CD4-positive, alpha-beta memory T cell (primary cell): ENCODE measurements at regions of chr9 and their contacts with region 1.

Region 1: GRCh38 chr9:114007991-114008666 is 70.0 kb downstream of the AMBP start:
- DNase-seq: no peak
- H3K4me3 ChIP-seq: no peak overlapping the region
- H3K4me3 Mint-ChIP-seq: no peak overlapping the region
- H3K27ac ChIP-seq: no peak overlapping the region
- H3K27ac Mint-ChIP-seq: no peak overlapping the region
- H3K4me1 ChIP-seq: no peaks in the 10 kb centered on the region
- H3K4me1 Mint-ChIP-seq: no peaks in the 10 kb centered on the region
- H3K27me3 ChIP-seq: no peaks in the 10 kb centered on the region
- H3K27me3 Mint-ChIP-seq: no peaks in the 10 kb centered on the region

Region 2: DNA sequence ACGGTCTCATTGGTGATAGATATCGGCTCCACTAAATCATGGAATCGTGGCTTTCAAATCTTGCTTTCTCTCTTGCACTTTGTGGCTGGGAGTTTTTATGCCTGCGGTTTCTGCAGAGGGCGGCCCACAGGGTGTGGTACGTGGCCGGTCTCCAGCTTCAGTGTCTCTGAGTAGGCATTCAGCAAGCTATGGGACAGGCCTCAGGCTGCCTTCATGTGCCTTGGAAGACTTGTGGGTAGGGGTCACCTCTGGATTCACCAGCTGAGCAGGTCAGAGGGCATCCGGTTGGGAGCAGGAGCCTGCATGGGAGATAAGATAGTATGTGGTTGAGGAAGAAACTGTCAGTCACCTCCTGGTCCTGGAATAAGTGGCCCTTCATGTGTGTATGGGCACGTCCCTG is 22.2 kb after region 1 on chr9:
- CTCF ChIA-PET with region 1: no interaction called
- POLR2A ChIA-PET with region 1: no interaction called
- intact Hi-C with region 1: loop called (anchors 1 kb)
- DNase-seq: no peak
- H3K4me3 ChIP-seq: no peak overlapping the region
- H3K4me3 Mint-ChIP-seq: no peak overlapping the region
- H3K27ac ChIP-seq: no peak overlapping the region
- H3K27ac Mint-ChIP-seq: no peak overlapping the region
- H3K4me1 ChIP-seq: no peaks in the 10 kb centered on the region
- H3K4me1 Mint-ChIP-seq: no peaks in the 10 kb centered on the region
- H3K27me3 ChIP-seq: no peaks in the 10 kb centered on the region
- H3K27me3 Mint-ChIP-seq: peaks cover 0 to 2% of the 10 kb centered on the region in 2 donors

Region 3: DNA sequence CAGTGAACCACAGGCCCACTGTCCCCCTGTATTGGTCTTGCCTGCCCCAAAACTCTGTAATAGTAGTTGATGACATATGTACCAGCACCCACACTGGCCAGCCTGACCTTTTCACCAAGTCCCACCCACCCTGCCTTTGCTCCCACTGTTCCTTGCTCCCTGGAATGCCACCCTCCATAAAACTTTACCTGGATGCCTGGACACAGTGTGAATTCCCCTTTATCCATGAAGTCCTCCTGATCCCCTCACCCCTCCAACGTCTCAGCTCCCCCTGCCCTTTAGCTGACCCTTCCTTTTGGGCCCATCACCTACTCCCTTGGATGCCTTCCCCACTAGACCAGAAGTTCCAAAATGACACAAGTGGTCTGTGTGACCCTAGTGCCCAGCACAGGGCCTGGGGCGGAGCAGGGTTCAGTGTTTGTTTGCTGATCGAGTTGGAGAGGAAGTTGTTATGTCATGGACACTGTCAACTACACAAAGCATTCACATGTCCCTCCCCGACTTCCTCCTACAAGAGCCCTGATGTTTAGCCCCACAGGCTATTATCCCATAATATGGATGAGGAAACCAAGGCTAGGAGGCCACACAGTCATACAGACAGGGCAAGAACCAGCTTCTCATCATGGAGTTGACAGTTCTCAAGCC is 53.8 kb after region 1 on chr9:
- CTCF ChIA-PET with region 1: no interaction called
- POLR2A ChIA-PET with region 1: no interaction called
- intact Hi-C with region 1: no loop called
- DNase-seq: no peak
- H3K4me3 ChIP-seq: no peak overlapping the region
- H3K4me3 Mint-ChIP-seq: no peak overlapping the region
- H3K27ac ChIP-seq: no peak overlapping the region
- H3K27ac Mint-ChIP-seq: no peak overlapping the region
- H3K4me1 ChIP-seq: no peaks in the 10 kb centered on the region
- H3K4me1 Mint-ChIP-seq: no peaks in the 10 kb centered on the region
- H3K27me3 ChIP-seq: no peaks in the 10 kb centered on the region
- H3K27me3 Mint-ChIP-seq: peaks cover 14 to 22% of the 10 kb centered on the region in 2 donors